ENCODE measurements at regions of chr16 and their contacts with region 1.

Region 1: GRCh38 chr16:11255737-11256660 is at the start of gene SOCS1:
- DNase-seq: peak; percentile 92
- ATAC-seq: peak; percentile 70
- H3K4me3 ChIP-seq: peak within 1 kb of the TSS; percentile 65 to 90 (median 72)
- H3K4me3 Mint-ChIP-seq: peak within 1 kb of the TSS; percentile 99
- H3K27ac ChIP-seq: peak within 1 kb of the TSS; percentile 86 to 90
- H3K27ac Mint-ChIP-seq: peak within 1 kb of the TSS; percentile 99
- H3K4me1 ChIP-seq: peaks cover 50 to 62% of the 10 kb centered on the region in 2 donors
- H3K4me1 Mint-ChIP-seq: peaks cover 53% of the 10 kb centered on the region
- H3K27me3 ChIP-seq: no peaks in the 10 kb centered on the region
- H3K27me3 Mint-ChIP-seq: no peaks in the 10 kb centered on the region
- CTCF ChIP-seq: peak; percentile 86
- total RNA-seq, gene SOCS1: 107 TPM in 2 replicates

Region 2: GRCh38 chr16:10971560-10971961 is 284.4 kb before region 1 on chr16:
- CTCF ChIA-PET with region 1: interaction called, 32 read pairs
- POLR2A ChIA-PET with region 1: interaction called, 9 read pairs
- intact Hi-C with region 1: no loop called
- DNase-seq: peak; percentile 64
- ATAC-seq: peak; percentile 39
- H3K4me3 ChIP-seq: no peak overlapping the region
- H3K4me3 Mint-ChIP-seq: no peak overlapping the region
- H3K27ac ChIP-seq: no peak overlapping the region
- H3K27ac Mint-ChIP-seq: no peak overlapping the region
- H3K4me1 ChIP-seq: no peaks in the 10 kb centered on the region
- H3K4me1 Mint-ChIP-seq: peaks cover 6% of the 10 kb centered on the region
- H3K27me3 ChIP-seq: no peaks in the 10 kb centered on the region
- H3K27me3 Mint-ChIP-seq: no peaks in the 10 kb centered on the region
- CTCF ChIP-seq: peak; percentile 89

Region 3: GRCh38 chr16:11181899-11182279 is 74.1 kb before region 1 on chr16:
- CTCF ChIA-PET with region 1: no interaction called
- POLR2A ChIA-PET with region 1: interaction called, 4 read pairs
- intact Hi-C with region 1: loop called (anchors 2 kb)
- DNase-seq: peak; percentile 67
- ATAC-seq: peak; percentile 50
- H3K4me3 ChIP-seq: no peak overlapping the region
- H3K4me3 Mint-ChIP-seq: peak overlapping the region; percentile 65
- H3K27ac ChIP-seq: no peak overlapping the region
- H3K27ac Mint-ChIP-seq: peak overlapping the region; percentile 73
- H3K4me1 ChIP-seq: peaks cover 10 to 34% of the 10 kb centered on the region in 2 donors
- H3K4me1 Mint-ChIP-seq: peaks cover 44% of the 10 kb centered on the region
- H3K27me3 ChIP-seq: no peaks in the 10 kb centered on the region
- H3K27me3 Mint-ChIP-seq: no peaks in the 10 kb centered on the region
- CTCF ChIP-seq: no peak

Region 4: DNA sequence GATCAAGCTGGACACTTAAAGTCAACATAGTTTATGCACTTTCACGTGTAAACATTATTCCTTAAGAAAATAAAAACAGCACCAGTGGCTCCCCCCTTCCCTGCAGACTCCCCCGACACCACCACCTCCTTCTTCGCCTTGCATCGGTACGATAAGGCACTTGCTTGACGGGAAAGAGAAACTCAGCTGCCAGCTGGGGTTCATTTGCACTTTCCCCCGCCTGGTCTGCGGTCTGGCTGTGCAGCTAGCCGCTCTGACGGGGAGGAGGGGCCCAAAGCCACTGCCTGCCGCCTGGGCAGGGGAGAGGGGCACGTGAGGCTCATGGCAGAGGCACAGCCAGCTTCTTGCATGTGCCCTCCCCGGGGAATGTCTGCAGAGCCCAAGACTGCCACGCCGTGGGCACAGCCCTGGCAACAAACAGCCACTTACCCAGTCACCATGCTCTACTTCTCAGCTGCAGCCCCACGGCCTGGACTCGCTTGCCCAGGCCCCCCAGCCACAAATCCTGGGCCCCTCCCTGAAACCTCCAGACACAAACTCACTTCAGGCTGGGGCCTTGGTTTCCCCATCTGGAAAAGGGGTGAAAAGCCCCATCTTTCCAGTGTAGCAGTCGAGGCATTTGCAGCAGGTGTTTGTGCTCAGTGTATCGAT is 41.6 kb after region 1 on chr16:
- CTCF ChIA-PET with region 1: interaction called, 130 read pairs
- POLR2A ChIA-PET with region 1: interaction called, 67 read pairs
- intact Hi-C with region 1: loop called (anchors 1 kb)
- DNase-seq: peak; percentile 95
- ATAC-seq: peak; percentile 97
- H3K4me3 ChIP-seq: peak overlapping the region in 4 of 5 experiments; percentile 0 to 41 (median 25)
- H3K4me3 Mint-ChIP-seq: peak overlapping the region; percentile 67
- H3K27ac ChIP-seq: peak overlapping the region; percentile 67 to 73
- H3K27ac Mint-ChIP-seq: peak overlapping the region; percentile 93
- H3K4me1 ChIP-seq: peaks cover 61 to 66% of the 10 kb centered on the region in 2 donors
- H3K4me1 Mint-ChIP-seq: peaks cover 71% of the 10 kb centered on the region
- H3K27me3 ChIP-seq: peaks cover 0 to 4% (median 0%) of the 10 kb centered on the region in 4 experiments
- H3K27me3 Mint-ChIP-seq: no peaks in the 10 kb centered on the region
- CTCF ChIP-seq: peak; percentile 35

Region 5: DNA sequence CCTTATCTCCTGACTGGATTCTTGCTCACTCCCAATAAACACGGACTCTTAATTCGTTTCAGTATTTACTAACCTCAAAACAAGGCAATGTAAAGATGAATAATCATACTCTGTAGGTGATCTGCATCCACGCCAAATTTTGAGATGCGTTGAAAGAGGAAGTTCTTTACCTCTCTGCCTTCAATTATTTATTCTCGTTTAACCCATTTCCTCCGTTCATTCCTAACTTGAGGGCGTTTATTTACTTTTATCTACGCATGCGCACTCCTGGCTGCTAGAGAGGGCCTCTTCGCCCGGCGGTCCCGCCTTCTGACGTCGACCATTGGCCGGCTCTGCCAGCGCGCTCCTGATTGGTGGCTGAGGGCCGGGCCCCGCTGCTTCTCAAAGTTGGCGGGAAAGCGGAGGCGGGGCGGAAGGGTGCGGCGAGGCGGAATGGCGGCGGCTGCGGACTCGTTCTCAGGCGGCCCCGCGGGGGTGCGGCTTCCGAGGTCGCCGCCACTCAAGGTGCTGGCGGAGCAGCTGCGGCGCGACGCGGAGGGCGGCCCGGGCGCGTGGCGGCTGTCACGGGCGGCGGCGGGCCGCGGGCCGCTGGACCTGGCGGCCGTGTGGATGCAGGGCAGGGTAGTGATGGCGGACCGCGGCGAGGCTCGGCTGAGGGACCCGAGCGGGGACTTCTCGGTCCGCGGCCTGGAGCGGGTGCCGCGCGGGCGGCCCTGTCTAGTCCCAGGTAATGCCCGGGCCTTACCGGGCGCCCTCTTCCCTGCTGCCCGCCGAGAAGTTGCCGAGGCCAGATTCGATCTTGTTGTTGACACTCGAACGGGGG is 89.3 kb after region 1 on chr16 and contains the start of gene RMI2:
- CTCF ChIA-PET with region 1: interaction called, 6 read pairs
- POLR2A ChIA-PET with region 1: interaction called, 15 read pairs
- intact Hi-C with region 1: no loop called
- DNase-seq: peak; percentile 97
- ATAC-seq: peak; percentile 100
- H3K4me3 ChIP-seq: peak within 1 kb of the TSS; percentile 61 to 76 (median 70)
- H3K4me3 Mint-ChIP-seq: peak within 1 kb of the TSS; percentile 90
- H3K27ac ChIP-seq: peak within 1 kb of the TSS in 1 of 2 donors; percentile 26
- H3K27ac Mint-ChIP-seq: peak within 1 kb of the TSS; percentile 78
- H3K4me1 ChIP-seq: peaks cover 8 to 25% of the 10 kb centered on the region in 2 donors
- H3K4me1 Mint-ChIP-seq: peaks cover 39% of the 10 kb centered on the region
- H3K27me3 ChIP-seq: no peaks in the 10 kb centered on the region
- H3K27me3 Mint-ChIP-seq: no peaks in the 10 kb centered on the region
- CTCF ChIP-seq: no peak
- total RNA-seq, gene RMI2: 25.5 and 27.0 TPM in 2 replicates

Region 6: DNA sequence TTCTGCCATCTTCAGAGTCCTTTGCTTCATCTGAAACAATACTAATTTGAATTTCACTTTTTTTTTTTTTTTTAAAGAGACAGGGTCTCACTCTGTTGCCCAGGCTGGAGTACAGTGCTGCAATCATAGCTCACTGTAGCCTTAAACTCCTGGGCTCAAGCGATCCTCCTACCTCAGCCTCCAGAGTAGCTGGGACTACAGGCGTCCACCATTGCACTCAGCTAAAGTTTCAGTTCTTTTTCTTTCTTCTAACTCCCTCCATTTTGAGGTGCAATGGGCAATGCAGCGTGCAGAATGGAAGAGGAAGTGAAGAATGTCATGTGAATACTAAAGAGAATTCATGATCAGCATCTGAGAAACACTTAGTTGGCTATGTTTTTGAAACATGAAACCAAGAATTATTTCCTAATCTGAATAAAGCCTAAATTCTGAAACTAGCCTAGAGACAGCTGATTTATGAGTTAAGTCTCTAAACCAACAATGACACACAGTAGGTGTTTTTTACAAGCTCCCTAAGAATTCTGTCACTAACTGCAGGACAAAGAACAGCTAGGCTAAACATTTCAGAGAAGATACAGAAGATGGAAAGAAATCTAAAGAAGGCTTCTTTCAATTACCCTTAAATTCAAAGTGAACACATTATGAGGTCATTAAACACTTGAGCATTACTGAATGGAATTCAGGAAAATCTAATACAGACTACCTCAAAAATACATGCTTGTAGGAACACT is 433.2 kb after region 1 on chr16:
- CTCF ChIA-PET with region 1: no interaction called
- POLR2A ChIA-PET with region 1: no interaction called
- intact Hi-C with region 1: loop called (anchors 10 kb)
- DNase-seq: peak; percentile 87
- ATAC-seq: peak; percentile 96
- H3K4me3 ChIP-seq: peak overlapping the region in 1 of 5 experiments; percentile 49
- H3K4me3 Mint-ChIP-seq: peak overlapping the region; percentile 88
- H3K27ac ChIP-seq: peak overlapping the region; percentile 80 to 89
- H3K27ac Mint-ChIP-seq: peak overlapping the region; percentile 98
- H3K4me1 ChIP-seq: peaks cover 70 to 71% of the 10 kb centered on the region in 2 donors
- H3K4me1 Mint-ChIP-seq: peaks cover 76% of the 10 kb centered on the region
- H3K27me3 ChIP-seq: no peaks in the 10 kb centered on the region
- H3K27me3 Mint-ChIP-seq: no peaks in the 10 kb centered on the region
- CTCF ChIP-seq: no peak

Region 7: GRCh38 chr16:12758031-12758701 is 1502.2 kb after region 1 on chr16:
- CTCF ChIA-PET with region 1: no interaction called
- POLR2A ChIA-PET with region 1: no interaction called
- intact Hi-C with region 1: no loop called
- DNase-seq: no peak
- ATAC-seq: no peak
- H3K4me3 ChIP-seq: no peak overlapping the region
- H3K4me3 Mint-ChIP-seq: no peak overlapping the region
- H3K27ac ChIP-seq: no peak overlapping the region
- H3K27ac Mint-ChIP-seq: no peak overlapping the region
- H3K4me1 ChIP-seq: no peaks in the 10 kb centered on the region
- H3K4me1 Mint-ChIP-seq: peaks cover 7% of the 10 kb centered on the region
- H3K27me3 ChIP-seq: no peaks in the 10 kb centered on the region
- H3K27me3 Mint-ChIP-seq: no peaks in the 10 kb centered on the region
- CTCF ChIP-seq: no peak